ENCODE measurements at regions of chr11 and their contacts with region 1.

Region 1: DNA sequence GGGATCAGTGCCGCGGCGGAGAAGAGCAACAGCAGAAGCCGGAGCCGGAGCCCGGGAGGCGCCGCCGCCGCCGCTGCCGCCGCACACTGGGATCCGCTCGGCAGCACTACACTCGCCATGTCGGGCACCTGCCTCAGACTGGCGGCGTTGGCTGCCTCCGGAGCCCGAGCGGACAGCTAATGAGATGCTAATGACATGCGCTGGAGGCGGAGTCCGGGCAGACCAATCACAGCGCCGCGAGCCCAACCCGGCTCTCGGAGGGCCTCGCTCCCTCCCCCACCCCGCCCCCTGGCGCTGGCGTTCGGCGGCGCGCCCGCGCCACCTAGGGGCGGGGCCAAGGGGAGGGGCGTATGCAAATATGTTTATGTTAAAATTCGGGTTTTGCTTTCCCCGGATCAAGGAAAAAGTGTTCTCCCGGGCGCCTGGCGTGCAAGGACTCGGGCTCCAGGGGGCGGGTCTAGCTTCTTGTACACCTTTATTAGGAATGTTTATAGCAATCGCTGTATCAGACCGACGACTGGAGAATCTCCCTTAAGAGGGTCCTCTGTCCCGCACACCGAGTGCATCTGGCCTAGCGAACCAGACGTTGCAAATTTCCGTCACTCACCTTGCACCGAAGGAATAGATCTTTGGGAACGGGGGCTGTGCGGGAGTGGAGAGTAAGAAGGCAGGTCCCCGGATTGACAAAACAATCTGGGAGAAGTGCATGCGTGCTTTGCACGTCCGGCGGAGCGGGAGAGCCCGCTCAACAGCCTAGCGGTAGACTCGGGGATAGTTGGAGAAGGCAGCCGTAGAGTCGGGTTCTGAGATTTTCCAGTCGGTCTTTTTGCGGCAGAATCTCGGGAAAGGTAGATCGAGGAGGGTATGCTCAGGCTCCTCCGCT is at the start of gene CADM1:
- DNase-seq: peak; percentile 76
- H3K4me3 Mint-ChIP-seq: peak within 1 kb of the TSS; percentile 62
- H3K27ac Mint-ChIP-seq: no peak within 1 kb of the TSS
- H3K4me1 Mint-ChIP-seq: peaks cover 11% of the 10 kb centered on the region
- H3K27me3 Mint-ChIP-seq: peaks cover 32% of the 10 kb centered on the region
- total RNA-seq, gene CADM1: 0.24 TPM in 1 of 2 experiments, not detected in the other

Region 2: DNA sequence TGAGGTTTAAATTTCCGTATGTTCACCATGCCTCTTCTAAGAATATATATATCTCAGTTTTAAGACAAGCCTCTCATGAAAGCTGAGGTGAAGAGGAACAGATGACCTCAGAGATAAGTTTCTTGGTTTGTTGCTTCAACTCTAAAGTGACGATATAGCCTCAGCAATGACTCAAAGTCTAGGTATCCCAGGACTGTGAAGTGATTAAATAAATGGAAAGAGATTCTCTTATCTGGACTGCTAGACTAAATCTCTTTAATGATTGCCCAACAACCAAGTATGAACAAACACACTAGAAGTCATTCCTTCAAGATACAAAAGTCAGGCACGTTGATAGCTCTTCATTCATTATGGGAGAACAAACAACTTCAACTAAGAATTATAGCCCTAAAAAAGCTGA is 15.6 kb before region 1 on chr11:
- CTCF ChIA-PET with region 1: no interaction called
- intact Hi-C with region 1: no loop called
- DNase-seq: no peak
- H3K4me3 Mint-ChIP-seq: no peak overlapping the region
- H3K27ac Mint-ChIP-seq: no peak overlapping the region
- H3K4me1 Mint-ChIP-seq: no peaks in the 10 kb centered on the region
- H3K27me3 Mint-ChIP-seq: peaks cover 27% of the 10 kb centered on the region

Region 3: GRCh38 chr11:115522302-115522701 is 17.8 kb after region 1 on chr11:
- CTCF ChIA-PET with region 1: no interaction called
- intact Hi-C with region 1: no loop called
- DNase-seq: no peak
- H3K4me3 Mint-ChIP-seq: no peak overlapping the region
- H3K27ac Mint-ChIP-seq: no peak overlapping the region
- H3K4me1 Mint-ChIP-seq: no peaks in the 10 kb centered on the region
- H3K27me3 Mint-ChIP-seq: peaks cover 14% of the 10 kb centered on the region

Region 4: DNA sequence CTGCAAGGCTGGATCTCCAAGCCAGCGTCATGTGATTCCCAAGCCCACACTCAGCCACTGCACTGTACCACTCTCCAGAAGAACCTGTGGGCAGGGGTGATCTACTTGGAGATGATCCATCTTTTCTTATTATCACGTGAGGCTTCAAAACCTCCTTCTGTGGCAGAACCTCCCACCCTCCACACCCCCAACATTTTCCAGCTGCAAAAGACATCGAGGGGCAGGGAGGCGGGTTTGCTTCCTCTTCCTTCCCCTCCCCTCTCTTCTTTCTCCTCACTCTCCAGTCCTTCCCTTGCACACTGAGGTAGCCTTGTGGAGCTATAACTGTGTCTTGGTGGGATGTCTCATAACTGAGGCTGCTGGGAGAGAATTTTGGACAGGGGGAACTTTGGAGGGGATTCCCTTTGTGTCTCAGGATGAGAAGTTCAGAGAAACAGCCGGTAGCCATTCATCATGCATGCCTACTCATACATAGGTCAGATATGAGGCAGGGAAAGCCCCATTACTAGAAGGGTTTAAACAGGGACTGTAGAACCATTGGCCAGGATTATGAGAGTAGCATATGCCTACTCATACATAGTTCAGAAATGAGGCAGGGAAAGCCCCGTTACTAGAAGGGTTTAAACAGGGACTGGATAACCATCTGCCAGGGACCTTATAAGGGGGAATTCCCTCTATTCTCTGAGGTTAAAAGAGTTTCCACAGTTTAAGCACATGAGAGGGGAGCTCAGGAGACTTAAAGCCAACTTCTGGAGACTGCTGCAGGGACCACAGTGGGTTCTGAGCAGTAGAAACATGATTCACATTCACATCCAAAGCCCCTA is 420.4 kb after region 1 on chr11:
- CTCF ChIA-PET with region 1: no interaction called
- intact Hi-C with region 1: loop called (anchors 5 kb)
- DNase-seq: peak; percentile 61
- H3K4me3 Mint-ChIP-seq: no peak overlapping the region
- H3K27ac Mint-ChIP-seq: no peak overlapping the region
- H3K4me1 Mint-ChIP-seq: peaks cover 12% of the 10 kb centered on the region
- H3K27me3 Mint-ChIP-seq: peaks cover 18% of the 10 kb centered on the region

Measured in activated naive CD4-positive, alpha-beta T cell treated with anti-CD3 and anti-CD28 coated beads for 36 hours (primary cell).